GM13976 (cell line): ENCODE measurements at regions of chr5 and their contacts with region 1.

Region 1: GRCh38 chr5:122415030-122415800 is 103.2 kb downstream of the SNCAIP start:
- DNase-seq: peak; percentile 25
- CTCF ChIP-seq: peak; percentile 78

Region 2: GRCh38 chr5:121949867-121950266 is 465.3 kb before region 1 on chr5:
- in situ Hi-C with region 1: loop called (anchors 25 kb)
- DNase-seq: no peak
- CTCF ChIP-seq: peak; percentile 59

Region 3: DNA sequence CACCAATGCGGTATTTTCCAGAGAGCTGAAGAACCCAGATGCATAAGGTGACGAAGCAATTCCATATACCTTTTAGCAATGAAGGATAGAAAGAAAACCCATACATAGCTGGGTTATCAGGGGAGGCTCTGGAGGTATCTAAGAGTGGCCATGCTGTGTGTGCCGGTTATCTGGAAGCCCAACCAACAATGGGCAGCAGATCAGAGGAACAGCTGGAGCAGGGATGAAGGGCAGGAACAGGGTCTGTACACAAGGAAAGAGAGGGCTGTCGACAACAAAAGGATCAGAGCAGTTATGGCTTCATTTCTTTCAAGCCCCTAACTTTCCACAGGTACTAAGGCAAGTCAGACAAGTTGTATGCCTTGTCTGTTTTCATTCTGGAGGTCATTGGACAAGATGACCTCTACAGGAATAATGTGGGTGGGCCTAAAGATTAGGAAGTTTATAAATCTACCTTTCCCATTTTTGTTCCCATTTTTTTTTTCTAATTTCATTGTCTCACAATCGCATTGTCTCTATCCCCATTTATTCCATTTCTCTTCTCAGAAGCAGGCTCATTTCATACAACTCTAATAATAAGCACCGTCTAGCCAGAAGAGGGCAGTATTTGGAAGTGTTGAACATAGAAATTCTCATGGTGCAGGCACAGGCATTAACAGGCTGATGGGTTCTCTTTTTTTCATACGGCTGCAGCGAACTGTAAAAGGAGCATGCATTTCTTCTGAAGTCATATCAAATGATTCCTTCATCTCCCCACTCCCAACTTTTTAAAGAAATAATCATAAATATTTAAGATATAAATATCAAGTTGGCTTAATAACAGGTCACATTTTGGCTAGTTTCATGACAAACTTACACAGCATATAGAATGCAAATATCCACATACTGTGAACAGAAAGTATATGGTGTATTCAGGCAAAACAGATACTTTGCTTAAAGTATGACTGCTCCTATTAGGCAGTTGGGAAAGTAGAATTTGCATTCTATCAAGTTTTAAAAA is 222.4 kb before region 1 on chr5:
- in situ Hi-C with region 1: loop called (anchors 10 kb)
- DNase-seq: peak; percentile 29
- CTCF ChIP-seq: peak; percentile 66

Region 4: DNA sequence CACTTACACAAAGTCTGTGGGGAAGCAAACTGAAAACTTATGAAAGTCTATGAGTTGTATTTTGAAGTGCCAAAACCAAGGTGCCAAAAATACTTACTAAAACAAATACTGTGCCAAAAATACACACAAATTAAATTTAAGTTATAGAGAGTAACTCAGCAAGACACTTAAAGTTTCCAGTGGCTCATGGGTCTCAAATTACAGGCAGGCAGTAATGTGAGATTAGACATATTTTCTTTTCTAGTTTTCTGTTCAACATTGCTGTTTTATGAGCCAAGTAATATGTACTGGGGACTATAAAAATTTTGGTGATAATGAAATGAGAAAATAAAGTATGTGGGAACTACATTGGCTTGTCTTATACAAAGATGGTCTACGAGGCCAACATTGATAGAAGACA is 187.5 kb after region 1 on chr5:
- in situ Hi-C with region 1: no loop called
- DNase-seq: no peak
- CTCF ChIP-seq: no peak